Activated naive CD4-positive, alpha-beta T cell treated with anti-CD3 and anti-CD28 coated beads, Interleukin-2, amount 10 ng/mL, durations not matched to agents 7 days and 5 days (primary cell): ENCODE measurements at regions of chr13 and their contacts with region 1.

Region 1: DNA sequence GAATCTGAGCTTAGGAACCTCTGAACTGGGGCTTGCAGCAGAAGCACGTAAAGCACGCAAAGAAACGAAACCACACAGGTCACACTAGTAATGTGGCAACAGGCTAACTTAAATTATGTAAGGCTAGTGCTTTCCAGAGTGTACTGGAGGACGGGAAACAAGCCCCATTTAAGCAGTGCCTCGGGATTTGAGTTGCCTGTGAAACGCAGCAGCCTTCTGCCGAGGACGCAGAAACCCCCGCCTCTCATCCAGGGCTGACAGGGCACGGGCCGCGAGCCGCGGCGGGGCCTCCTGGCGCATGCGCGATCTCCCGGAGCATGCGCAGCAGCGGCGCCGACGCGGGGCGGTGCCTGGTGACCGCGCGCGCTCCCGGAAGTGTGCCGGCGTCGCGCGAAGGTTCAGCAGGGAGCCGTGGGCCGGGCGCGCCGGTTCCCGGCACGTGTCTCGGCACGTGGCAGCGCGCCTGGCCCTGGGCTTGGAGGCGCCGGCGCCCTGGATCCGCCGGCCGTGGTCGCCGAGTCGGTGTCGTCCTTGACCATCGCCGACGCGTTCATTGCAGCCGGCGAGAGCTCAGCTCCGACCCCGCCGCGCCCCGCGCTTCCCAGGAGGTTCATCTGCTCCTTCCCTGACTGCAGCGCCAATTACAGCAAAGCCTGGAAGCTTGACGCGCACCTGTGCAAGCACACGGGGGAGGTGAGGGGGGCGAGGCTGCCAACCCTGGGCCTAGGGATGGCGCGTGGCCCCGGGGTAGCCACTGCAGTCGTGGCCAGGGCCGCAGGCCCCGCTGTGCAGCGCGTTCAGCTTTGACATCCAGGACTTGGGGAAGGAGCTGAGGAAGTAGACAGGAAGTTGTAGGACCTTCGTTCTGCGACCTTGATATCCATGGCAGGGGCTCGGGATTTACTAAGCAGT is at the start of gene GTF3A:
- DNase-seq: peak; percentile 88
- H3K4me3 Mint-ChIP-seq: peak within 1 kb of the TSS; percentile 79
- H3K27ac Mint-ChIP-seq: peak within 1 kb of the TSS; percentile 97
- H3K4me1 Mint-ChIP-seq: peaks cover 41% of the 10 kb centered on the region
- H3K27me3 Mint-ChIP-seq: no peaks in the 10 kb centered on the region

Region 2: GRCh38 chr13:27147530-27148170 is 276.9 kb before region 1 on chr13:
- CTCF ChIA-PET with region 1: no interaction called
- DNase-seq: no peak
- H3K4me3 Mint-ChIP-seq: no peak overlapping the region
- H3K27ac Mint-ChIP-seq: peak overlapping the region; percentile 24
- H3K4me1 Mint-ChIP-seq: peaks cover 35% of the 10 kb centered on the region
- H3K27me3 Mint-ChIP-seq: no peaks in the 10 kb centered on the region

Region 3: DNA sequence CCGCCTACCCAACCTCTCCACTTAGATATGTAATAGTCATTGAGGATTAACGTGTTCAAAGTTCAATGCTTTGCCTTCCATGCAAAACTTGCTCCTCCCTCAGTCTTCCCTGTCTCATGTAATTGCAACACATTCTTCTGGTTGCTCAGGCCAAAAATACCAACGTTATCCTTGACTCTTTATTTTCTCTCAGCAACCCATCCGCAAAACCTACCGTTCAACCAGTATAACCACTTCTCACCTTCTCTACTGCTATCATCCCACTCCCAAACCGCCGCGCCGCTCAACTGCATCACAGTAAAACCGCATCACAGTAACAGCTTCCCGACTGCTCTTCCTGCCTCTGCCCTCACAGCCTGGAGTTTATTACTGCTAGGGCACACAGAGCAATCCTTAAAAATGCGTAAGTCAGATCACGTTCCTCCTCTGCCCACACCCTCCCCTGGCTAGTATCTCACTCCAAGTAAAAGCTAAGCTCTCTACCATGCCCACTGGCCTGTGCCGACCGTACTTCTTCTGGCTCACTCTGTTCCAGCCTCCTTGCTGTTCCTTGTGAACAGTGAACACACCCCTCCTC is 17.7 kb after region 1 on chr13:
- CTCF ChIA-PET with region 1: interaction called, 13 read pairs
- DNase-seq: peak; percentile 44
- H3K4me3 Mint-ChIP-seq: peak overlapping the region; percentile 32
- H3K27ac Mint-ChIP-seq: peak overlapping the region; percentile 78
- H3K4me1 Mint-ChIP-seq: peaks cover 72% of the 10 kb centered on the region
- H3K27me3 Mint-ChIP-seq: no peaks in the 10 kb centered on the region